Colonic mucosa (tissue), 4 donors: ENCODE measurements at regions of chr4 and their contacts with region 1.

Region 1: GRCh38 chr4:74950200-74950599 is 17.3 kb downstream of the PARM1 start:
- DNase-seq: no peak
- H3K4me3 ChIP-seq: no peak overlapping the region
- H3K27ac ChIP-seq: no peak overlapping the region
- H3K4me1 ChIP-seq: no peaks in the 10 kb centered on the region
- H3K27me3 ChIP-seq: no peaks in the 10 kb centered on the region
- CTCF ChIP-seq: no peak

Region 2: DNA sequence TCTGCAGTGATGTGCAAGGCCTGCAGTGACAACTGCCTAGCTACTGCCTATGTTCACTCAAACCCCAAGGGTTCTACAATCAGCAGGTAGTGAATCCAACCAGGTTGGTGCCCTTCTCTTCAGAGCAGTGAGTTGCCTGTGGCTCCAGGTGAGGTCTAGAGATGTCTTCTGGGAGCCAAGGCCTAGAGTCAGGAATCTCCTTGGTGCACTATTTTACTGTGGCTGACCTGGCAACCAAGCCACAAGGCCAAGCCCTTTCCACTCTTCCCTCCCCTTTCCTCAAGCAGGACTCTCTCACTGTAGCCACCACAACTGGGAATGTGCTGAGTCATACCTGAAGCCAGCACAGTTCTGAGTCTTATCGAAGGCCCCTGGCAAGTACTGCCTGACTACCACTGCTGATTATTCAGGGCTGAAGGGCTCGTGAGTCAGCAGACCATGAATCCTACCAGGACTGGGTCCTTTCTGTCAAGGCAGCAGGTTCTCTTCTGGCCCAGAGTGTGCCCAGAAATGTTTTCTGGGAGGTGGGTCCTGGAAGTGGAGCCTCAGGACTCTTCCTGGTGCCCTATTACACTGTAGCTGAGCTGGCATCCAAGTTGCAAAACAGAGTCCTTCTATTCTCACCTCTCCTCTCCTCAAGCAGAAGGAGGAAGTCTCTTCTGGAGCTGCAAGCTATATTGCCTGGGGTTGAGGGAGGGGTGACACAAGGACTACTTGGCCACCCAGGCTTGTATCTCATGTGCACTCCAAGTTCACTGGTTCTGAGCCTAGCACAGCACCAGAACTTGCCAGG is 267.4 kb before region 1 on chr4:
- intact Hi-C with region 1: no loop called
- DNase-seq: no peak
- H3K4me3 ChIP-seq: no peak overlapping the region
- H3K27ac ChIP-seq: no peak overlapping the region
- H3K4me1 ChIP-seq: no peaks in the 10 kb centered on the region
- H3K27me3 ChIP-seq: no peaks in the 10 kb centered on the region
- CTCF ChIP-seq: no peak

Region 3: DNA sequence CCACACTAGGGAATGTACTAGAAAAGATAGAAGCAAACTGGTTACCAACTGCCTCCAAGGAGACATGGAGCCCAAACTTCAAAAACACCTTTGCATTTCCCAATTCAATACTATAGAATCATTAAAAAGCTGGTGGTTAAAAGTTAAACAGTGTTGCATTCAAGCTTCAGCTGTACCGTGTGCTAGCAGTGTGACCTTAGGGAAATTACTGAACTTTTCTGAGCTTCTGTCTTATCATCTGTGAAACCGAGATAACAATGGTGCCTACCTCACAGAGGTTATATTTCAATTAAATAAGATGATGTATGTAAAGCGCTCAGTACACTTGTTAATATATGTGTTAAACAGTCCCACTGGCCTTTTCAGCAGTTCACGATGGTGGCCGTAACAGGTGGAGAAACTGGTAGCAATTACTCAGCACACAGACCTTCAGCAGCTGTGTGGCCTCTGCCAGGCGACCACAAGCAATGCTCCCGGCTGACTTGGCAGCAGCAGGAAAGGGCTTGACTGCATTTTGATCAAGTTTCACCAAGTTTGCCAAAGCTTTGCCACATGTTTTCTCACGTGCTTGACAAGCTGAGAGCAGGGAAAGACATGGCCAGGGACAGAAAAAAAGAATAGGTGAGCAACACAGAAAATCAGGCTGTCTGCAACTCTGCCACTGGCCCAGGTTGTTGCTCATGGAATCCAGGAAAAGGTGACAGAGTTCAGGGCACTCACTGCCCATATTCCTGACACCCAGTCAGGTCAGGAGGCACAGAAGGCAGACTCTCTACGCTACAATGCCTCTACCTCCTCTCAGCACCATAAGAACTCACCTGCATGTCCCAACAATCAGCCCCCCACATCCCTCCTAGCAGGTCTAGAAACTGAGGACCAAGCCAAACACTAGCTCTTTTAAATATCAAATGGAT is 54.8 kb after region 1 on chr4:
- intact Hi-C with region 1: loop called (anchors 5 kb)
- DNase-seq: no peak
- H3K4me3 ChIP-seq: no peak overlapping the region
- H3K27ac ChIP-seq: no peak overlapping the region
- H3K4me1 ChIP-seq: no peaks in the 10 kb centered on the region
- H3K27me3 ChIP-seq: no peaks in the 10 kb centered on the region
- CTCF ChIP-seq: no peak

Region 4: DNA sequence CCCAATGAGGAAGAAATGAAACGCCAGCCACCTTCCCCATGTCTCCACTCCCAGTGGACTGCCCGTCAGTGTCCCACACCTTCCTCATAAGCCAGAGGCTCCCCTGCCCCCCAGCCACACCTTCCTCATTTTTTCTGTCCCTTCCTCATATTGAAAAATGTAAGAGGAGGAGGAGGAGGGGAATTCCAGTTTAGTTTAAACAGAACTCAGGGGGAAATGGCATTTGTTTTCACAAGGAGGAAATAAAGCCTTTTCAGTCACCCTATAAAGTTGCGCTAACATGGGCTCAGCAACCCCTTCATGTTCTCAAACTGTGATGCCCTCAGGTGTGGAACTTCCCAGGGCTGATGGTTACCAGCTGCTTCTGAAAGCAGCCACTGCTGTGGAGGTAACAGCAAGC is 80.5 kb after region 1 on chr4:
- intact Hi-C with region 1: no loop called
- DNase-seq: peak; percentile 94
- H3K4me3 ChIP-seq: no peak overlapping the region
- H3K27ac ChIP-seq: peak overlapping the region; percentile 76
- H3K4me1 ChIP-seq: peaks cover 16% of the 10 kb centered on the region
- H3K27me3 ChIP-seq: no peaks in the 10 kb centered on the region
- CTCF ChIP-seq: no peak